Panc1 (cell line): ENCODE measurements at regions of chr2 and their contacts with region 1.

Region 1: DNA sequence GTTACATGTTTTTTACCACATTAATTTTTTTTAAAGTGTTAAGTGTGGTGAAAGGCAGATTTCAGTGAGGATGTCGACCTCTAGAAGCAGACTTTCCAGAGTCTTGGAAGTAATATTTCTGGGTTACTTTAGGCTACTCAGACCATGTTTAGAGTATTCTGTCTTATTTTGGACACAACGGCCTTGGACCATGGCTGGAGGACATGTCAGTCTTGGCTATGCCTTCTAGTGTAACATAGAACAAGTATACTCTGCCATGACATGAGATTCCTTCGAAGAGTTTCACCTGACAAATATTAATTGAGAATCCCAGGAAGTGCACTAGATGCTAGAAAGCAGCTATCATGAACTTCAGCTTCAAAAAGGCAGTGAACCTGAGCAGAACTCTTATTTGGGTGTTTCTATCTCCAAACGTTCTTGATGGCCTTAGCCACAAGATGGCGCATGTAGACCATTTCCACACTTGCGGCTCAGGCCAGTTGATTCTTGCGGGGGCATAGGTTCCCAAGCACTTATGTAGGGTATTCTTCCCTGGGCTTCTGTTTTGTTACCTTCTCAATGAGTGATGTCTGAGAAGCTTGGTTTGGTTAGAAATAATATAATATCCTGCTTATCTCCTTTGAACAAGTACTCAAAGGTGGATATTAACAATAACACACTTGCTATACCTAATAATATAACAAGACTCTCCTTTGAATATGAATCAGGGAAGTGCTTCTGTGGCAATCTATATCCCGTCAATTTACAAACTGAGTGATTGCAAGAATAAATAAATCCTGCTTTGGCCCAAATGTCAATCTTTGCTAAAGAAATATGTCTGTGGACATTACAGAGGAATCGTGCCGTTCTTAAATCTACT is 62.0 kb downstream of the CACNB4 start:
- DNase-seq: peak; percentile 61
- ATAC-seq: peak; percentile 91
- H3K4me3 ChIP-seq: no peak overlapping the region
- H3K27ac ChIP-seq: no peak overlapping the region
- H3K4me1 ChIP-seq: no peaks in the 10 kb centered on the region
- H3K27me3 ChIP-seq: no peaks in the 10 kb centered on the region
- CTCF ChIP-seq: peak; percentile 90

Region 2: DNA sequence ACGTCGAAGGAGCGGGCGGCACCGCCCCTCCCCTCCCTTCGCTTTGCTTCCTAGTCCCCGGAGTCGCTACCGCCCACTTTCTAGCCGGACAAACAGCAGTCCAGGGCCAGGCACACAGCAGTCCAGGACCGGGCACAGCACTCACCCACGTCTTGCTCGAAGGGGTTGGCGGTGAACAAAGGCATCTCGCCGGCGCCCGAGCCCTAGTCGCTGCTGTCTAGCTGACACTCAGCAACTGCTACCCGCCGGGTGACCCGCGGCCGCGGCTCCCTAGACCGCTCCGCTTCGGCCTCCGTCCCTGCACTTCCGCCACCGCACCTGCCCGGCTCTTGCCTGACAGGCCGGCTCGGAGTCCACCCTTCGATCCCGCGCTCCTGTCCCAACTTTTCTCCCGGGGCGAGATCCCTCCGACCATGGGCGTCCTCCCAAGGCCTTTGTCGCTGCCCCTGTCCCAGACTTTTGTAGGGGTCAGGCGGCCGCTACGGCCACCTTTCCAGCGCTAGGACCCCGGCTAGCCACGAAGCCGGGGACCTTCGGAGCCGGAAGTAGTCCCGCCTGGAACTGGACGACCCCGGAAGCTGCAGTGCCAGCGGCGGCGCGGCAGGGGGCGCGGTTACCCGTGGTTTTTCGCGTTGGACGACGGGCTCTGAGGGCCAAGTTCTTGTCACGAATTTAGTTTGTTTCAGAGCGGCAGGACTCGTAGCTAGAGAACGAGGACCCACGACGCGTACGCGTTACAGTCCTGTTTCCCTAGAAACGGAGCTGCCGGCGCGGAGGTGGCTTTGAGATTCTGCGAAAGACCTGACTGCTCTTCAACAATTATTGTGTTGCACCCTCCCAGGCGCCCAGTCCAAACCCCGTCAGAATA is 138.9 kb after region 1 on chr2 and contains the start of gene STAM2:
- CTCF ChIA-PET with region 1: no interaction called
- POLR2A ChIA-PET with region 1: no interaction called
- in situ Hi-C with region 1: no loop called
- intact Hi-C with region 1: loop called (anchors 2 kb)
- DNase-seq: peak; percentile 74
- ATAC-seq: peak; percentile 92
- H3K4me3 ChIP-seq: peak within 1 kb of the TSS; percentile 96 to 97
- H3K27ac ChIP-seq: peak within 1 kb of the TSS; percentile 97
- H3K4me1 ChIP-seq: peaks cover 29% of the 10 kb centered on the region
- H3K27me3 ChIP-seq: no peaks in the 10 kb centered on the region
- CTCF ChIP-seq: peak; percentile 95
- total RNA-seq, gene STAM2: 29.1 TPM

Region 3: GRCh38 chr2:152407204-152407721 is 370.4 kb after region 1 on chr2:
- CTCF ChIA-PET with region 1: no interaction called
- POLR2A ChIA-PET with region 1: no interaction called
- in situ Hi-C with region 1: no loop called
- intact Hi-C with region 1: no loop called
- DNase-seq: no peak
- ATAC-seq: peak; percentile 78
- H3K4me3 ChIP-seq: peak overlapping the region; percentile 26 to 53
- H3K27ac ChIP-seq: peak overlapping the region; percentile 94
- H3K4me1 ChIP-seq: peaks cover 74% of the 10 kb centered on the region
- H3K27me3 ChIP-seq: no peaks in the 10 kb centered on the region
- CTCF ChIP-seq: peak; percentile 12; the same call in 1 of the 2 replicates